ENCODE measurements at regions of chr20 and their contacts with region 1.

Region 1: GRCh38 chr20:44247586-44248409 is 690 bp downstream of the GDAP1L1 start:
- DNase-seq: peak; percentile 84 to 95
- H3K4me3 ChIP-seq: no peak overlapping the region
- H3K4me3 Mint-ChIP-seq: no peak overlapping the region
- H3K27ac Mint-ChIP-seq: no peak overlapping the region
- H3K4me1 ChIP-seq: no peaks in the 10 kb centered on the region
- H3K4me1 Mint-ChIP-seq: no peaks in the 10 kb centered on the region
- H3K27me3 ChIP-seq: no peaks in the 10 kb centered on the region
- H3K27me3 Mint-ChIP-seq: peaks cover 5% of the 10 kb centered on the region
- CTCF ChIP-seq: peak; percentile 98 to 100

Region 2: GRCh38 chr20:44028868-44029847 is 218.6 kb before region 1 on chr20:
- CTCF ChIA-PET with region 1: no interaction called
- POLR2A ChIA-PET with region 1: no interaction called
- intact Hi-C with region 1: no loop called
- DNase-seq: peak in 1 of 2 experiments; percentile 35
- H3K4me3 ChIP-seq: no peak overlapping the region
- H3K4me3 Mint-ChIP-seq: no peak overlapping the region
- H3K27ac Mint-ChIP-seq: no peak overlapping the region
- H3K4me1 ChIP-seq: no peaks in the 10 kb centered on the region
- H3K4me1 Mint-ChIP-seq: no peaks in the 10 kb centered on the region
- H3K27me3 ChIP-seq: peaks cover 6% of the 10 kb centered on the region
- H3K27me3 Mint-ChIP-seq: peaks cover 42% of the 10 kb centered on the region
- CTCF ChIP-seq: no peak

Region 3: DNA sequence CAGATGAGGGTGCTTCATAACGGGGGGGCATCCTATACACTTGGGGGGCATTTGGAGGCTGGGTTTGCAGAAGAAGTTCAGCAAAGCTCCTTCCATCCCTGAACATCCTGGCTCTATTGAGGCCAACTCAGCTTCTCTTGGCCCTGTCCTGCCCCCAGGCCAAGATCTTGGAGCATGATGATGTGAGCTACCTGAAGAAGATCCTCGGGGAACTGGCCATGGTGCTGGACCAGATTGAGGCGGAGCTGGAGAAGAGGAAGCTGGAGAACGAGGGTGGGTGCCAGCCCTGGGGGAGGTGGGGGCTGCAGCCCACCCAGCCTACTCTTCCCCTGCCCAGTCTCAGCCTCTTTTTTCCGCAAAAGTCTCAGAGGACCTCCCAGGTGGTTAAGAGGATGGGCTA is 16.5 kb after region 1 on chr20:
- CTCF ChIA-PET with region 1: interaction called, 7 read pairs
- POLR2A ChIA-PET with region 1: no interaction called
- intact Hi-C with region 1: loop called (anchors 1 kb)
- DNase-seq: peak; percentile 63 to 70
- H3K4me3 ChIP-seq: no peak overlapping the region
- H3K4me3 Mint-ChIP-seq: no peak overlapping the region
- H3K27ac Mint-ChIP-seq: no peak overlapping the region
- H3K4me1 ChIP-seq: no peaks in the 10 kb centered on the region
- H3K4me1 Mint-ChIP-seq: no peaks in the 10 kb centered on the region
- H3K27me3 ChIP-seq: no peaks in the 10 kb centered on the region
- H3K27me3 Mint-ChIP-seq: peaks cover 14% of the 10 kb centered on the region
- CTCF ChIP-seq: no peak